Ascending aorta (tissue), 2 donors: ENCODE measurements at regions of chr13 and their contacts with region 1.

Region 1: GRCh38 chr13:30880856-30881155 is 25.3 kb upstream of the MEDAG start:
- DNase-seq: peak in 1 of 2 donors; percentile 82
- H3K4me3 ChIP-seq: no peak overlapping the region
- H3K27ac ChIP-seq: peak overlapping the region; percentile 92 to 96
- H3K4me1 ChIP-seq: peaks cover 6 to 45% of the 10 kb centered on the region in 2 donors
- H3K27me3 ChIP-seq: no peaks in the 10 kb centered on the region
- CTCF ChIP-seq: no peak

Region 2: DNA sequence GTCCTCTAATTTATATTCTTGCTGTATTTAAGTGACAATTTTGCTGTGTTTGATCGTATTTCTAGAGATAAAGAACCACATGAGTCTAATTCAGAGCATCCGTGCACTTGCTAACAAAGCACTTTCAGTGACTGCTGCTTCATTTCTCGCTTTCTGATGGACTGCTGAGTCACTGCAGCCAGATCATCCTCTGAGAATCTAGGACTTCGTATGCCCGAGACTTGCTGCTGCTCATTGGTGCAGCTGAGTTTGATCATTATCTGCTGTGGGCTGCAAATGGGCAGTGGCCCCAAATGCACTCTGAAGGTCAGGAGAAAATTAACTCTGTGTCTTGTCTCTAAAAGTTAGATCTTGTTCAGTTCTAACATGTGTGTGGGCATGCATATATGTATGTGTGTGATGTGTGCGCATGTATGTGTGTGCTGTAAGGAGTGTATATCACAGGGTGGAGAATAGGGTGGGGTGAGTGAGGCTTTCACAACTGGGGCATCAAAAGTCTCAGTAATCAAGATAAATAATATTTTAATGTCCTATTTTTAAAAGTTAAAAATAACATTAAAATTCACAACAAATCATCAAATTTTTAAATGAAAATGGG is 1718.1 kb before region 1 on chr13:
- intact Hi-C with region 1: no loop called
- DNase-seq: no peak
- H3K4me3 ChIP-seq: no peak overlapping the region
- H3K27ac ChIP-seq: no peak overlapping the region
- H3K4me1 ChIP-seq: no peaks in the 10 kb centered on the region
- H3K27me3 ChIP-seq: no peaks in the 10 kb centered on the region
- CTCF ChIP-seq: no peak

Region 3: DNA sequence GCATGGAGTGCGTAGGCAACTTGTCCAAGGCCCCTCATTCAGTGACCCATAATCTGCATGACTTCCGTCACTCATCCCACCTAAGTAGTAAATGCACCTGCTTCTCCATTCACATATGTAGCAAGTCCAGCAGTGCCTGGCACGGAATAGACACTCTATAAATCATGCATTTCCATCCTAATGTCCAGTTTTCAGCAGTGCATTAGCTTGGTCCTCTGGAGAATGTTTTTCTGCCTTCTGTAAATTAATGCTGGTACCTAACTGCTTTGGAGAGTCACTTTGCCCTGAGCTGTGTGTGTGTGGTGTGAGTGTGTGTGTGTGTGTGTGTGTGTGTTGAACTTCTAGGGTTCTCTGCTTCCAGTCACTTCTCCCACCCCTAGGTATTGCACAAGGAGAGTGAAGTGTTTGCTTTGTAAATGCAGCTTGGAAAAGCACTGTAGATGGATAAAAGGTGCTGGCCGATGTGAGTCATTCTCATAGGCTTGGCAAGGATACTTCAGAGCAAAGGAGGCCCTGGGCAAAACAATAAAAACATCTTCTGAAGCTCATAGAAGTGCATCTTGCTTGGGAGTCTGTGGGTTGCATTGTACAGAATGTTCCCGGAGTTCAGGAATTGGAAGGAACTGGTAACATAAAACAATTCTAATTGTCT is 755.3 kb before region 1 on chr13:
- intact Hi-C with region 1: no loop called
- DNase-seq: no peak
- H3K4me3 ChIP-seq: no peak overlapping the region
- H3K27ac ChIP-seq: no peak overlapping the region
- H3K4me1 ChIP-seq: no peaks in the 10 kb centered on the region
- H3K27me3 ChIP-seq: no peaks in the 10 kb centered on the region
- CTCF ChIP-seq: no peak

Region 4: DNA sequence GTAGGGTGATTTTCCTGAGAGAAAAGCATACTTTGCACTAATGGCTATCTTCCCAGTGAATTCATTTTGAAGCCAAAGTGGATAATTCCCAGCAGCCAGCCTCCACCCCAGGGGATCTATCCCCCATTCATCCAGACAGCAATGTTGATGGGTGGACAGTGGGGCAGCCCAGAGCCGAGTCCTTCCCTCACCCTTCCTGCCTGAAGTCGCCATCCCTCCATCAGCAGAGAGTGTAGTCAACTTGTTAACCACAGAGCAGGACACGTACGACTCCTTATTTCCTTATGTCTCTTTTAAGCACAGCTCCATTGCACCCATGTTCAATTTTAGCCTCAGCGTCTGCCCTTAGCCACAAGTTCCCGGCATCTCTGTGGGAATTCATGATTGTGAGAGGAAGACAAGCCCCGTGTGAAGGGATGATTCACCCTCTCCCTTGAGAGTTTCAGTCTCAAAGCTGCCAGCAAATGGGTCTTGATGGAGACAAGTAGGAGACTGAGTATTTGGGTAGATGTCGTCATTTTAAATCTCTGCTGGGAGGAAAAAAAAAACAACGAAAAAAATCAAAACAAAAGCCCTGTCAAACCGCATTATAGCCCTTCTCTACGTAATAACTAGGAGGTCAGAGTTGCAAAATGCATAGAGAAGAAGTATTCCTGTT is 33.0 kb before region 1 on chr13:
- intact Hi-C with region 1: no loop called
- DNase-seq: peak; percentile 48 to 90
- H3K4me3 ChIP-seq: peak overlapping the region in 1 of 2 donors; percentile 1
- H3K27ac ChIP-seq: peak overlapping the region; percentile 74 to 87
- H3K4me1 ChIP-seq: peaks cover 0 to 7% of the 10 kb centered on the region in 2 donors
- H3K27me3 ChIP-seq: no peaks in the 10 kb centered on the region
- CTCF ChIP-seq: no peak

Region 5: DNA sequence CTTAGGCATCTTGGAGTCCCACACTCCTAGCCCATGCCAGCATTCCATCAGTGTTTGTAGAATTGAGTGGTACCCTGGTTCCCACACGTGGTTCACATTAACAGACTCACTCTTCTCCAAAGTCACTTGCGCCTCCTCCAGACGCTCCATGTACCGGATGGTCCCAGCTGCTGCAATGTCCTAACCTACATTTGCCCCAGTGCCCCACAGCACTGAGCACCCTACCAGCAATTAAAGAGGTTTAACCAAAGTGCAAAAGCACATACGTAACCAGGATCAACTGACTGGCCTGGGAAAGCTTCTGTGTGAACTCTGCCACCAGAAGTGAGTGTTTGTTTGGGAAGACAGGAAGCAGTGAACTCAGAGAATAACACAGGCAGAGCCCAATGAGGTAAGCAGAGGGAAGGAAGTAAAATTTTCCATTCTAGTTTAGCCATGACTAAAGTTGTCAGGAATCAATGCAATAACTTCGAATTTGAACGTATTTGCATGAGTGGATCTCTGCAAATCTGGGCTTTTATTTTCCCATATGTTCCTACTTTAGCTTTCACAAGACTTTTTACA is 18.0 kb after region 1 on chr13:
- intact Hi-C with region 1: loop called (anchors 1 kb)
- DNase-seq: peak; percentile 54 to 94
- H3K4me3 ChIP-seq: peak overlapping the region in 1 of 2 donors; percentile 42
- H3K27ac ChIP-seq: peak overlapping the region; percentile 98 to 99
- H3K4me1 ChIP-seq: peaks cover 24 to 52% of the 10 kb centered on the region in 2 donors
- H3K27me3 ChIP-seq: no peaks in the 10 kb centered on the region
- CTCF ChIP-seq: peak in 1 of 3 experiments; percentile 12